Activated naive CD4-positive, alpha-beta T cell treated with anti-CD3 and anti-CD28 coated beads for 36 hours (primary cell): ENCODE measurements at regions of chr1 and their contacts with region 1.

Region 1: DNA sequence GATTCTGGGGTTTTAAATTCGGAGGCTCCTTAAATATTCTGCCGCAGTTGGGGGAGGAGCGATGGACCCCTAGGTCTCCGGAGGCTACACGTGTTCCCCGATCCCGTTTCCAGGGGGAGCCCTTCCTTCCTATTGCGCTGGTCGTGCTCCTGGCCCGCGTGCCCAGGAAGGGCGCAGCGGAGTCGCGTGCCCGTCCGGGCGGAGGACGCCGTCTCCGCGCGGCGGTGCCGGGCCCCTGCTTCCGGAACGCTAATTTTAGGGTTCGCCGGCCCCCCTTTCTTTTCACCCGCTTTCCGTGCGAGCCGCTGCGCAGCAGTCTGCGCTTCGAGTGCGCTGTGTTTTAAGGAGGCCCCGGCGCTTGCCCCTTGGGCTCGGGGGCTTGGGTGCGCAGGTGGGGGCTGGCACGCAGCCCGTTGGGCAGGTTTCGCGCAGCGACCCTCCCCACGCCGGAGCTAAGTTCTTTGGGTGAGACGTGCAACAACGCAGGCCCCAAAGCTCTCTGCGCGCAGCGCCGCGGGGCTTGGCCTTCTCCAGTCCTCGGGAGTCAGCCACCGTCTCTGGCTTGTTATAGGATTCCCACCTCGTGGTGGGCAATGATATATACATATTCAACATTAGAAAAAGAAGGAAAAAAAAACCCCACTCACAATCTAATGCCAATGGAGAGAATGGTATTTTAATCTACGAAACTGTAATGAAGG is 43.5 kb upstream of the DNAJC6 start:
- DNase-seq: peak; percentile 35
- H3K4me3 Mint-ChIP-seq: peak overlapping the region; percentile 35
- H3K27ac Mint-ChIP-seq: no peak overlapping the region
- H3K4me1 Mint-ChIP-seq: peaks cover 27% of the 10 kb centered on the region
- H3K27me3 Mint-ChIP-seq: peaks cover 16% of the 10 kb centered on the region

Region 2: DNA sequence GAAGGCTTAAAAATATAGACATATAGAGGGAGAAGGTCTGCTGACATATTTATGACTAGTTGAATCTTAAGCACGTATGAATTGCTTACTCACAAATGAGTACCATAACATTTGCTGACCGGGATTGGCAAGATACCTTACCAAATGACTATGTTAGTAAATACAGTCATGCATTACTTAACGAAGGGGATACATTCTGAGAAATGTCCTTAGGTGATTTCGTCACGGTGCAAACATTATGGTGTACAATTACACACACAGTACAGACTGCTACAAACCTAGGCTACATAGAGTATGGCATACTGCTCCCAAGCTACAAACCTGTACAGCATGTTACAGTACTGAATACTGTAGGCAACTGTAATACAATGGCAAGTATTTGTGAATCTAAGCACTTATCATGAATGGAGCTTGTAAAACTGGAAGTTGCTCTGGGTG is 1081.8 kb before region 1 on chr1:
- CTCF ChIA-PET with region 1: no interaction called
- intact Hi-C with region 1: loop called (anchors 5 kb)
- DNase-seq: no peak
- H3K4me3 Mint-ChIP-seq: no peak overlapping the region
- H3K27ac Mint-ChIP-seq: no peak overlapping the region
- H3K4me1 Mint-ChIP-seq: peaks cover 6% of the 10 kb centered on the region
- H3K27me3 Mint-ChIP-seq: no peaks in the 10 kb centered on the region

Region 3: DNA sequence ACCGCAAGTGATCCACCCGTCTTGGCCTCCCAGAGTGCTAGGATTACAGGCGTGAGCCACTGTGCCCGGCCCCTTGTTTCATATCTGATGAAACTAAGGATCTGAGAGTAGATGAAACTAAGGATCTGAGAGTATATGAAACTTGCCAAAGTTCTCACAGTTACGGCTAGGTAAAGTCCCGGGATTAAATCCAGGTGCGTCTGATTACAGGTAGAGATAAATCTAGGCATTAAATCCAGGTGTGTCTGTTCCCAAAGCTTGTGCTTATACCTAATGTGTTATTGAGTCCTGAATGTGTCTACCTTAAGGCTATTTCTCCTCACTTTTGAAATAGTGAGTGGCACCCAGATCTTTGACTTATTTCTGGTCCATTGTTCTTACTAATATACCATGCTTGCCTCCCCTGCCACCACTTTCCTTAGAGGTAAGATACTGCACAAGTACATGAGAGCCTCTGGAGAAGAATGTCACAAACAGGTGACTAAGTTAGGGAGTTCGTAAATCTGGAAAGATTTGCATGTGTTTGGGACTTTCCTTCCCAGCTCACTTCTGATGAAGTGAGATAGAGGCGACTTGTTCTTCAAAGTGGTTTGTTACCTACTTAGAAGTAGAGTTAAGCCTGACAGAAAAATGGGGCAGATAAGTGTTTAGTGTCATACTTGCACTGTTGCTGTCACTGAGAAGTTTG is 51.3 kb before region 1 on chr1:
- CTCF ChIA-PET with region 1: interaction called, 11 read pairs
- intact Hi-C with region 1: loop called (anchors 1 kb)
- DNase-seq: no peak
- H3K4me3 Mint-ChIP-seq: no peak overlapping the region
- H3K27ac Mint-ChIP-seq: no peak overlapping the region
- H3K4me1 Mint-ChIP-seq: peaks cover 41% of the 10 kb centered on the region
- H3K27me3 Mint-ChIP-seq: no peaks in the 10 kb centered on the region

Region 4: DNA sequence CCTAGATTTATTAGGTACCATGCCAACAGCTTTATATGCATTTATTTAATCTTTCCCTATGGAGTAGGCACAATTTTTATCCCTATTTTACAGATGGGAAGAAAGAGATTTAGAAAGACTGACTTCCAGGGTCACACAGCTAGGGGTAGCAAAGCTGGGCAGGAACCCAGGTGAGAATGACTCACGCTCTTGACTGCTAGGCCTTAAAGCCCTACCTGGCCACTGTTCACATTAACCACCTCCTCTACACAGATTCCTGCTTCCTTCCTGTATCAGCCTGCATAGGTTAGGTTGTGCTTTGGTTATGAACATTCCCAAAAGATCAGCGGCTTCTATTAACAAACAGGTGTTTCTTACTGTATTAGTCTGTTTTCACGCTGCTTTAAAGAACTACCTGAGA is 96.7 kb after region 1 on chr1:
- CTCF ChIA-PET with region 1: no interaction called
- intact Hi-C with region 1: no loop called
- DNase-seq: no peak
- H3K4me3 Mint-ChIP-seq: no peak overlapping the region
- H3K27ac Mint-ChIP-seq: no peak overlapping the region
- H3K4me1 Mint-ChIP-seq: no peaks in the 10 kb centered on the region
- H3K27me3 Mint-ChIP-seq: no peaks in the 10 kb centered on the region